ENCODE measurements at regions of chr1 and their contacts with region 1.

Region 1: GRCh38 chr1:155001675-155002463 is 733 bp upstream of the ZBTB7B start:
- DNase-seq: peak; percentile 85
- H3K4me3 ChIP-seq: peak overlapping the region; percentile 93
- CTCF ChIP-seq: peak; percentile 60

Region 2: DNA sequence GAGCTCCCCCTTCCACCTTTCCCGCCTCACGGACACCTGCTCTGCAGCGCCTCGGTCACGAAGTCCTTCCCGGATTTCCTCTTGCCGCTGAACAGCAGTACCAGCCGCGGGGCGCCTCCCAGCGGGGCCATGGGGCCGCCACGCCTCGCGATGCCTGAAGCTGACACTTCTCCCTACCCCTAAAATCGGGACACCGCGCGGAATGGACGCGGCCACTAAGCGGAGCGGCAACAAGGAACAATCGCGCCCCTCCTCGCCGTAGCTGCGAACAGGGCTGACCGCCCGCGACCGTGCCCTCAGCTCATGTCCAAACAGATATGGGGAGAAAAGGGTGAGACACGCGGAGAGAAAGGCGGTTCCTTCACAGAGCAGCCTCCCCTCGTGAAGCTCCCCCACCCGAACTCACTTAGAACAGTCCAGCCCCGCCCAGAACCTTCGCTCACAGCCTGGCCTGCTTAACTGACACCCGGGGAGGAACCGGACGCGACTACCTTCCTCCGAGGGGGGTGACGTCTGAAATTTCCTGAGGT is 65.2 kb before region 1 on chr1 and contains the start of gene PMVK:
- CTCF ChIA-PET with region 1: interaction called, 15 read pairs
- POLR2A ChIA-PET with region 1: interaction called, 3 read pairs
- DNase-seq: peak; percentile 76
- H3K4me3 ChIP-seq: peak within 1 kb of the TSS; percentile 95
- CTCF ChIP-seq: peak; percentile 46

Region 3: GRCh38 chr1:154955718-154956543 is 45.9 kb before region 1 on chr1 and contains the start of gene PBXIP1:
- CTCF ChIA-PET with region 1: interaction called, 70 read pairs
- POLR2A ChIA-PET with region 1: interaction called, 6 read pairs
- DNase-seq: peak; percentile 50
- H3K4me3 ChIP-seq: peak within 1 kb of the TSS; percentile 66
- CTCF ChIP-seq: peak; percentile 31

Region 4: GRCh38 chr1:154961497-154962262 is 40.2 kb before region 1 on chr1 and contains the start of gene PYGO2:
- CTCF ChIA-PET with region 1: interaction called, 70 read pairs
- POLR2A ChIA-PET with region 1: interaction called, 6 read pairs
- DNase-seq: no peak
- H3K4me3 ChIP-seq: peak within 1 kb of the TSS; percentile 74
- CTCF ChIP-seq: peak; percentile 38

Region 5: GRCh38 chr1:154967331-154967950 is 34.4 kb before region 1 on chr1:
- CTCF ChIA-PET with region 1: interaction called, 176 read pairs
- POLR2A ChIA-PET with region 1: interaction called, 9 read pairs
- DNase-seq: no peak
- H3K4me3 ChIP-seq: peak overlapping the region; percentile 82
- CTCF ChIP-seq: no peak

Region 6: GRCh38 chr1:154974063-154974807 is 27.6 kb before region 1 on chr1 and contains the start of gene CKS1B:
- CTCF ChIA-PET with region 1: interaction called, 176 read pairs
- POLR2A ChIA-PET with region 1: interaction called, 9 read pairs
- DNase-seq: peak; percentile 100
- H3K4me3 ChIP-seq: peak within 1 kb of the TSS; percentile 75
- CTCF ChIP-seq: no peak

Region 7: GRCh38 chr1:154982897-154983648 is 18.8 kb before region 1 on chr1 and contains the start of gene FLAD1:
- CTCF ChIA-PET with region 1: interaction called, 176 read pairs
- POLR2A ChIA-PET with region 1: interaction called, 3 read pairs
- DNase-seq: peak; percentile 98
- H3K4me3 ChIP-seq: peak within 1 kb of the TSS; percentile 84
- CTCF ChIP-seq: no peak